Left ventricle myocardium inferior (tissue), 1 donor: ENCODE measurements at regions of chrX and their contacts with region 1.

Region 1: GRCh38 chrX:151753313-151754041 is 18.9 kb downstream of the CNGA2 start:
- DNase-seq: peak; percentile 32
- H3K4me3 ChIP-seq: no peak overlapping the region
- H3K27ac ChIP-seq: no peak overlapping the region
- H3K4me1 ChIP-seq: peaks cover 3% of the 10 kb centered on the region
- H3K27me3 ChIP-seq: no peaks in the 10 kb centered on the region
- CTCF ChIP-seq: peak; percentile 83

Region 2: DNA sequence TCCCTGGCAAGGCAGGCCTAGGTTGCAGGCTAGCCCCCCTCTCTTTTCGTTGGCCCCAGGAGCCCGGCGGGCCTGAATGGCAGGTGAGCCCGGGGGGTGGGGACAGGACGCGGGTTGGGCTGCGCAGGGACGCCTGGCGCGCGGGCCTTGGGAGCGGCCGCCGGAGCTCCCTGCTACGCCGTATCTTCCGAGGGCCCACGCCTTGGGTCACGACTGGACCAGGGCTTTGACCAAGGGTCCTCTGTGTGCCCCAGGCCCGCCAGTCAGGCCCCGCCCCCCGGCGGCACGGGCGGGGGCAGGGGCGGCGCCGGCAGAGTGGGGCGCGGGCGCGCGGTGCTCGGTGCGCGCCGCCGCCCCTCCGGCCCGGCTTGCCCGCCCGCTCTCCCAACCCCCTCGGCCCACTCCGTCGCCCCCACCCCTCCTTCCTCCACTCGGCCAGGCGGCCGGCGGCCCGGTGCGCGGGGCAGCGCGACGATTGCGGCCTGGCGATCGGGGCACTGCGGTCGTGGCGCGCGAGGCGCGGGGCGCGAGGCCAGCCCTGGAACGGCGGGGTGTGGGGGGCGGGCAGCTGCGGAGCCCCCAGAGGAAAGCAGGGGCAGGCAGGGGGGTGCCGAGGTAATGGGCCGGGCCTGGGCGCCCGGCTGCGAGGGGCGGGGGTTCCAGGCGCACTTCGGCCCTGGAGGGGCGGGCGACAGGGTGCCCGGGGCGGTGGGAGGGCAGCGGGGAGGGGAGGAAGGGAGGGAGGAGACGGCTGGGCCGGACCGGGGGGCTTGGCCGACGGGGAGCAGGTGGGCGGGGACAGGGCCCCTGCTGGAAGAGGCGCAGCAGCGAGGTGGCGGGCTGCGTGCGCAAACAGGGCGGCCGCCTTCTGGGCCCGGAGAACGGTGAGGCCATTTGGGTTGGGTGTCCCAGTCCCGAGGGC is 58.6 kb before region 1 on chrX and contains the start of gene PRRG3:
- intact Hi-C with region 1: no loop called
- DNase-seq: no peak
- H3K4me3 ChIP-seq: peak within 1 kb of the TSS; percentile 56
- H3K27ac ChIP-seq: peak within 1 kb of the TSS; percentile 19
- H3K4me1 ChIP-seq: no peaks in the 10 kb centered on the region
- H3K27me3 ChIP-seq: peaks cover 9% of the 10 kb centered on the region
- CTCF ChIP-seq: no peak
- total RNA-seq, gene PRRG3: 2.7 TPM

Region 3: GRCh38 chrX:152632445-152633097 is 879.1 kb after region 1 on chrX:
- intact Hi-C with region 1: loop called (anchors 10 kb)
- DNase-seq: peak; percentile 18
- H3K4me3 ChIP-seq: no peak overlapping the region
- H3K27ac ChIP-seq: no peak overlapping the region
- H3K4me1 ChIP-seq: no peaks in the 10 kb centered on the region
- H3K27me3 ChIP-seq: peaks cover 15% of the 10 kb centered on the region
- CTCF ChIP-seq: peak; percentile 79